Endothelial cell of umbilical vein (primary cell): ENCODE measurements at regions of chr5 and their contacts with region 1.

Region 1: DNA sequence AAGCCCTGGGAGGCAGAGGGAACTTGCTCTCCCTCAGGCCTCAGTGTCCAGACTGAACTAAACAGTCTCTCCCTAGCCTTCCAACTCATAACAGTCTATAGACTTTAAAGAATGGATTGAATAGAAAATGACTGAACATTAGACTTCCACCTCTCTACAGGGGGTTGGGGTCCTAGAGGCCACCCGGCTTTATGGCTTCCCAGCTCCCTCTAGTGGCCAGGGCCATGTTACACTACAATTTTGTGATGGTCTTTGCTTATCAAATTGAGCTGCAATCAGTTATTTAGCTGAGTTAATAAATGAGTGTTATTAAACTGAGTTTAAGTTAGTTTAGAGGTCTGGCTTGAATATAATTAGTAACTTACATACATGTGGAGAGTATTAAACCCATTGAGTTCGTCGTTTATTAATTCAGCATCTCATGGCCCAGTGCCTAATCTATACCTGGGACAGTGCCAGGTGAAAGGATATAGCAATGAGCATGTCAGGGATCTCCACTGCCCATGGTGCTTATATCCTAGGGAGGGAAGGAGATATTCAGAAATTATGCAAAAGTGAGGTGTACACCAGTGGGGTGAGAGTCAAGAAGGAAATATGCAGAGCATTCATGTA is 105.2 kb downstream of the SH3TC2 start:
- DNase-seq: peak; percentile 66
- H3K4me3 ChIP-seq: no peak overlapping the region
- H3K27ac ChIP-seq: no peak overlapping the region
- H3K4me1 ChIP-seq: no peaks in the 10 kb centered on the region
- H3K27me3 ChIP-seq: no peaks in the 10 kb centered on the region
- CTCF ChIP-seq: peak; percentile 77 to 88
- POLR2A ChIP-seq: no peak

Region 2: DNA sequence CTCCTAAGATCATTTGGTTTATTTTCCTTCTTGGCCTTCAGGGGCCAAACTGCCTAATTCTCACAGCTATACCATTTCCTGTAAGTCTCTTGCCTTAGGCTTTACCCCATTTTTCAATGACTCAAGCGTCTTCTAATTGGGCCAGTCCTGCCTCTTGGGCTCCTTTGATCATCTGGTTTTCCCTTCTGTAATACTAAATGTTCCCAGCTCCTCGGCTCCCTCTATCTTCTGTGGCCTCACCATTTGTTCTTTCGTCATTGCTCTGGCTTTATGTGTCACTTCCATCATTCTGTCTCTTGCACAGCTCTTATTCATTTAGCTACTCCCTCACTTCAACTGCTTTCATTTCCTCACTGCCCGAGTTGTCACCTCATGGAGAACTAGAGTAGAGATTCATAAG is 660.0 kb before region 1 on chr5:
- CTCF ChIA-PET with region 1: no interaction called
- POLR2A ChIA-PET with region 1: no interaction called
- dilution Hi-C with region 1: no loop called
- intact Hi-C with region 1: no loop called
- DNase-seq: no peak
- H3K4me3 ChIP-seq: no peak overlapping the region
- H3K27ac ChIP-seq: no peak overlapping the region
- H3K4me1 ChIP-seq: no peaks in the 10 kb centered on the region
- H3K27me3 ChIP-seq: no peaks in the 10 kb centered on the region
- CTCF ChIP-seq: no peak
- POLR2A ChIP-seq: no peak

Region 3: GRCh38 chr5:148820461-148821395 is 137.0 kb before region 1 on chr5:
- CTCF ChIA-PET with region 1: interaction called, 149 read pairs
- POLR2A ChIA-PET with region 1: interaction called, 3 read pairs
- dilution Hi-C with region 1: no loop called
- intact Hi-C with region 1: loop called (anchors 1 kb)
- DNase-seq: peak; percentile 45
- H3K4me3 ChIP-seq: no peak overlapping the region
- H3K27ac ChIP-seq: no peak overlapping the region
- H3K4me1 ChIP-seq: peaks cover 6% of the 10 kb centered on the region
- H3K27me3 ChIP-seq: no peaks in the 10 kb centered on the region
- CTCF ChIP-seq: peak; percentile 57 to 68
- POLR2A ChIP-seq: no peak

Region 4: DNA sequence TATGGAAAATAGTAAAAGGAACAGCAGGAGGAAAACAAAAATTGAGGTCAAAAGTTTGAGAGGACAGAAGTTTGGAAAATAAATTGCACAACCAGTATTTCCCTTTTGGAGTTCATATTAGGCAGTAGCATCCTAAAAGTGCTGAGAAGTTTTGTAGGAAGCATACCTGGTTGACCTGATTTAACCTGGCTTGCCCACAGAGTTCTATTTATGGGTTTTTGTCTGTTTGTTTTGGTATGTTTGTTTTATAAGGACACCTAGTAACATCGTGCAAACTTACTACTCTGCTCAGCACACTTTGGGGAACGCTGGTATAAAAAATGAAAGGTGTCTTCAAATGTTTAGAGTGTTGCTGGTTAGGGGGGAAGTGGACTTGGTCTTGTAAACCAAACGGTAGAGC is 116.2 kb before region 1 on chr5:
- CTCF ChIA-PET with region 1: interaction called, 10 read pairs
- POLR2A ChIA-PET with region 1: no interaction called
- dilution Hi-C with region 1: no loop called
- intact Hi-C with region 1: no loop called
- DNase-seq: no peak
- H3K4me3 ChIP-seq: no peak overlapping the region
- H3K27ac ChIP-seq: no peak overlapping the region
- H3K4me1 ChIP-seq: peaks cover 13% of the 10 kb centered on the region
- H3K27me3 ChIP-seq: no peaks in the 10 kb centered on the region
- CTCF ChIP-seq: no peak
- POLR2A ChIP-seq: no peak

Region 5: GRCh38 chr5:148937239-148937638 is 20.5 kb before region 1 on chr5:
- CTCF ChIA-PET with region 1: interaction called, 11 read pairs
- POLR2A ChIA-PET with region 1: no interaction called
- dilution Hi-C with region 1: no loop called
- intact Hi-C with region 1: no loop called
- DNase-seq: no peak
- H3K4me3 ChIP-seq: no peak overlapping the region
- H3K27ac ChIP-seq: no peak overlapping the region
- H3K4me1 ChIP-seq: peaks cover 9% of the 10 kb centered on the region
- H3K27me3 ChIP-seq: no peaks in the 10 kb centered on the region
- CTCF ChIP-seq: no peak
- POLR2A ChIP-seq: no peak

Region 6: DNA sequence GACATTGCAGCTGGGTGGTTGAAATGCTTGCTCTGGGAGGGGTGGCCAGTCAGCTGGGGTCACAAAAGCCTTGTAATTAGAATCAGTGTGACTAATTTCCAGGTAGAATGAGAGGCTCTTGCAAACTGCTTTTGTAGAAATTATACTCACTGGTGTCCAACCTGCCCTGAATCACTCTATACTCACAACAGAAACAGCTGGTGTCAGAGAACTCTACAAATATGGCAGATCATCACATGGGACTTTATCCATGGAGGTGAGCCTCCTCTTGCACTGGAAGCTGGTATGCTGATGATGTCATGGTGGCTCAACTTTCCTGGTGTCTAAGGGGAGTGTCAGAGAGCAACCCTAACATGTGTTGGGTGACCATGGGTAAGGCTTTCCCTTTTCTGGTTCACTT is 33.9 kb after region 1 on chr5:
- CTCF ChIA-PET with region 1: interaction called, 42 read pairs
- POLR2A ChIA-PET with region 1: no interaction called
- dilution Hi-C with region 1: no loop called
- intact Hi-C with region 1: no loop called
- DNase-seq: no peak
- H3K4me3 ChIP-seq: no peak overlapping the region
- H3K27ac ChIP-seq: no peak overlapping the region
- H3K4me1 ChIP-seq: no peaks in the 10 kb centered on the region
- H3K27me3 ChIP-seq: no peaks in the 10 kb centered on the region
- CTCF ChIP-seq: no peak
- POLR2A ChIP-seq: no peak